ENCODE measurements at regions of chr12 and their contacts with region 1.

Region 1: DNA sequence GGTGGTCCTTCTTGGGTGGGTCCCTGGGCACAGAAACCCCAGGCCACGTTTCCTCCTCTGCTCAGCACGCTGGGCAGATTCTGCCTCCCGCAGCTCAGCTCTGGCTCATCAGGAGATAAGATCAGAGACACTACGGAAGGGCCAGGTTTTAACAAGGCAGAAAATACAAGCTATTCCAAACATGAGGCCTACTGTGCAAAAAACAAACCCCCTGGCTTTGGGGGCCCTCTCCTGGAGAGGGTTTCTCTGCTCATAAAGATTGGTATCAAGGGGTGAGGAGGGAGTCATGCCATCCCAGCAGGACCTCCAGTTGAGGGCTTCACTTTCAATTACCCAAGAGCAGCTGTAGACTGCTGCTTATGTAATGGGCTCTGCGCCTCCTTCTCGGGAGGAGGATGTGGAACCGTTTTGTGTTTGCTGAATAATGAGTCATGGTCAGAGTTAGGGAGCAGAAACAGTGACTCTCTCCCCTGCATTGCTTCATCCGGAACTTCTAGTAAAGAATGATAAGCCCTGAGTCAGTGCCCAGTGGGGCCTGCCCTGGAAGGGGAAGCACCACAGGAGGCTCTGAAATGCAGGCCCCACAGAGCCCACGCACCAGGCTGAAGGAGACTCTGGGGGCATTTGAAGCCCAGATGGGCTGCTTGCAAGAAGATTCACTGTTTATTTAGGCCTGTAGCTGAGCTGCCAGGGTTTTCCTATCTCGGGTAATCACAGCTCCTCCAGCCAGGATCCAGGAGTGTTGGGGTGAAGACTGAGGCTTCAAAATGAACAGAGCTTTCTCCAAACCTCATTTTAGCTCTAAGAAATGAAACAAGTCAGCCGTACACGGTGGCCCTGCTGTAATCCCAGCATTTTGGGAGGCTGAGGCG is 79.3 kb downstream of the SSPN start:
- DNase-seq: peak; percentile 43
- ATAC-seq: peak; percentile 98
- H3K4me3 Mint-ChIP-seq: peak overlapping the region; percentile 28
- H3K27ac Mint-ChIP-seq: peak overlapping the region; percentile 78
- H3K4me1 Mint-ChIP-seq: peaks cover 53% of the 10 kb centered on the region
- H3K27me3 Mint-ChIP-seq: no peaks in the 10 kb centered on the region
- CTCF ChIP-seq: no peak

Region 2: GRCh38 chr12:24630446-24630845 is 1644.2 kb before region 1 on chr12:
- CTCF ChIA-PET with region 1: no interaction called
- POLR2A ChIA-PET with region 1: no interaction called
- intact Hi-C with region 1: loop called (anchors 5 kb)
- DNase-seq: no peak
- ATAC-seq: no peak
- H3K4me3 Mint-ChIP-seq: no peak overlapping the region
- H3K27ac Mint-ChIP-seq: no peak overlapping the region
- H3K4me1 Mint-ChIP-seq: peaks cover 3% of the 10 kb centered on the region
- H3K27me3 Mint-ChIP-seq: peaks cover 2% of the 10 kb centered on the region
- CTCF ChIP-seq: no peak

Region 3: DNA sequence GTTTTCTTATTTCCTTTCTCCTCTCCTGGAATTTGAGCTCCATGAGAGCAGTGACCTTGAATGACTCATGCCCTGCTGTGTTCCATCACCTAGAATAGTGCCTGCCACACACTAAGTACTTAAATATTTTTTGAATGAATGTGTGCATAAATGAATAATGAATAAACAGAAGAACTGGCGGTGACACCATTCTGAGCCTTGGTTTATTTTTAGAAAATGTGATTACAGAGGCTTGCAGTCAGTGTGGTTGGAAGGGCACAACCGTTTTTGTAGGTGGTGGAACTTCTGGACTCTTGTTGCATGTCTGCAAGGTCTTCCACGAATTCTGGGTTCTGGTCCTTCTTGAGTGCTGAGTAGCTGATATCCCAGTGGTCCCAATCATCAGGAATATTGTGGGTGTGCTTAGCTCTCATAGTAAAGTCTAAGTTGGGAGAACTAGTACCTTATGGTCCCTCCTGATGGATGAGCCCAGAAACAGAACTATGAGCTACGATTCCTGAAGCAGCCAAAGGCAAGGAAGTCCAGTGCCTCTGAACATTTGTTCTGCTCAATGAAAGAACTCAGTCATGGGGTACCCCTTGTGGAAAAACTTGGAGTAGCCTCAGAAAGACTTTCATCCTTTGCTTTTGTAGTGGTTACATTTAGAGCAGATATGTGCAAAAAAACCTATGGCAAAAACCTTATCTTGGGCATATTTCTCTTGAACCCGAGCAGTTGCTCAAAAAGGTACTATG is 121.1 kb before region 1 on chr12:
- CTCF ChIA-PET with region 1: interaction called, 4 read pairs
- POLR2A ChIA-PET with region 1: interaction called, 9 read pairs
- intact Hi-C with region 1: loop called (anchors 1 kb)
- DNase-seq: no peak
- ATAC-seq: no peak
- H3K4me3 Mint-ChIP-seq: no peak overlapping the region
- H3K27ac Mint-ChIP-seq: peak overlapping the region; percentile 27
- H3K4me1 Mint-ChIP-seq: peaks cover 77% of the 10 kb centered on the region
- H3K27me3 Mint-ChIP-seq: no peaks in the 10 kb centered on the region
- CTCF ChIP-seq: no peak

Region 4: GRCh38 chr12:26298785-26299621 is 24.3 kb after region 1 on chr12:
- CTCF ChIA-PET with region 1: no interaction called
- POLR2A ChIA-PET with region 1: interaction called, 19 read pairs
- intact Hi-C with region 1: loop called (anchors 1 kb)
- DNase-seq: no peak
- ATAC-seq: peak; percentile 98
- H3K4me3 Mint-ChIP-seq: peak overlapping the region; percentile 63
- H3K27ac Mint-ChIP-seq: peak overlapping the region; percentile 80
- H3K4me1 Mint-ChIP-seq: peaks cover 34% of the 10 kb centered on the region
- H3K27me3 Mint-ChIP-seq: no peaks in the 10 kb centered on the region
- CTCF ChIP-seq: no peak

Region 5: GRCh38 chr12:26327975-26328644 is 53.4 kb after region 1 on chr12:
- CTCF ChIA-PET with region 1: no interaction called
- POLR2A ChIA-PET with region 1: no interaction called
- intact Hi-C with region 1: loop called (anchors 1 kb)
- DNase-seq: no peak
- ATAC-seq: peak; percentile 95
- H3K4me3 Mint-ChIP-seq: peak overlapping the region; percentile 32
- H3K27ac Mint-ChIP-seq: peak overlapping the region; percentile 82
- H3K4me1 Mint-ChIP-seq: peaks cover 25% of the 10 kb centered on the region
- H3K27me3 Mint-ChIP-seq: no peaks in the 10 kb centered on the region
- CTCF ChIP-seq: no peak

Region 6: DNA sequence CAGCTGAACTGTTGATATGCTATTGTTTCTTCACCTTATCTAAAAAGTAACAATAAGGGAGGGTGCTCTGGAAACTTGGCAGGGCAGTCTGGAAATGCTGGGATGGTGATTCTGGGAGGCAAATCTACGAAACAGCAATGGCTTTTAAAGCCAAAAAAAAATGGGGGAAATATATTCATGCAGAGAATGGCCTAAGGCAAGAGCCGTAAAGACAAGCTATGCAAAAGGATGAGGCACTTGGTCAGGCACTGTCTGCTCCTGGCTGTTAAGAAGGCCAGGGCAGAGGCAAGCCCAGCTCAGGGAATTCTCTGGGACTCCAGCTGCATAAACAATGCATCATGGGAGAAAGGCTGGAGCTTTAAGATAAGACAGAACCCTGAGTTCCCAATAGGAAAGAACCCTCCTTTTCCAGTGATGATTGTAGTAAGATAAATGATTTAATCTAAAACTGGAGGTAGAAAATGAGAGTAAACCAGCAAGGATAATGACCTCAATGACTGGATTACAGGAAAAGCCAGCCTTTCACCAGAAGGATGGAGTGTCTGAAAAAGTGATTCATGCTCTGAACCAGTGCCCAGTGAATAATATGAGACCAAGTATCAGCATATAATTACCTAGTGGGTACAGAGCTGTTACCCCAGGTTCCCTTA is 512.3 kb after region 1 on chr12:
- CTCF ChIA-PET with region 1: no interaction called
- POLR2A ChIA-PET with region 1: no interaction called
- intact Hi-C with region 1: no loop called
- DNase-seq: no peak
- ATAC-seq: no peak
- H3K4me3 Mint-ChIP-seq: no peak overlapping the region
- H3K27ac Mint-ChIP-seq: no peak overlapping the region
- H3K4me1 Mint-ChIP-seq: peaks cover 20% of the 10 kb centered on the region
- H3K27me3 Mint-ChIP-seq: no peaks in the 10 kb centered on the region
- CTCF ChIP-seq: no peak